ENCODE measurements at regions of chr20 and their contacts with region 1.

Region 1: GRCh38 chr20:1392823-1393506 is at the start of gene FKBP1A:
- DNase-seq: peak; percentile 84 to 97 (median 92)
- ATAC-seq: peak; percentile 83
- H3K4me3 ChIP-seq: peak within 1 kb of the TSS; percentile 85
- H3K4me3 Mint-ChIP-seq: peak within 1 kb of the TSS; percentile 98
- H3K27ac ChIP-seq: peak within 1 kb of the TSS; percentile 37 to 72
- H3K27ac Mint-ChIP-seq: peak within 1 kb of the TSS; percentile 89
- H3K4me1 ChIP-seq: peaks cover 60% of the 10 kb centered on the region
- H3K4me1 Mint-ChIP-seq: peaks cover 61% of the 10 kb centered on the region
- H3K27me3 ChIP-seq: no peaks in the 10 kb centered on the region
- H3K27me3 Mint-ChIP-seq: no peaks in the 10 kb centered on the region
- CTCF ChIP-seq: no peak
- total RNA-seq, gene FKBP1A: 43.3 to 45.4 TPM

Region 2: DNA sequence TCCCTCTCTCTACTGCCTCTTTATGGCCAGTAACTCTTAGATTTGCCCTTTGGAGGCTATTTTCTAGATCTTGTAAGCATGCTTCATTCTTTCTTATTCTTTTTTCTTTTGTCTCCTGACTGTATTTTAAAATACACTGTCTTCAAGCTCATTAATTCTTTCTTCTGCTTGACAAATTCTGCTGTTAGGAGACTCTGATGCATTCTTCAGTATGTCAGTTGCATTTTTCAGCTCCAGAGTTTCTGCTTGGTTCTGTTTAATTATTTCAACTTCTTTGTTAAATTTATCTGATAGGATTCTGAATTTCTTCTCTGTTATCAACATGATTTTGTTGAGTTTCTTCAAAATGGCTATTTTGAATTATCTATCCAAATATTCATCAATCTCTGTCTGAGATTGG is 39.0 kb before region 1 on chr20:
- CTCF ChIA-PET with region 1: no interaction called
- POLR2A ChIA-PET with region 1: no interaction called
- intact Hi-C with region 1: no loop called
- DNase-seq: no peak
- ATAC-seq: no peak
- H3K4me3 ChIP-seq: no peak overlapping the region
- H3K4me3 Mint-ChIP-seq: no peak overlapping the region
- H3K27ac ChIP-seq: no peak overlapping the region
- H3K27ac Mint-ChIP-seq: no peak overlapping the region
- H3K4me1 ChIP-seq: peaks cover 10% of the 10 kb centered on the region
- H3K4me1 Mint-ChIP-seq: peaks cover 33% of the 10 kb centered on the region
- H3K27me3 ChIP-seq: no peaks in the 10 kb centered on the region
- H3K27me3 Mint-ChIP-seq: no peaks in the 10 kb centered on the region
- CTCF ChIP-seq: no peak

Region 3: GRCh38 chr20:1437235-1437904 is 44.4 kb after region 1 on chr20:
- CTCF ChIA-PET with region 1: interaction called, 3 read pairs
- POLR2A ChIA-PET with region 1: interaction called, 6 read pairs
- intact Hi-C with region 1: loop called (anchors 2 to 5 kb)
- DNase-seq: peak; percentile 68 to 90 (median 75)
- ATAC-seq: peak; percentile 70
- H3K4me3 ChIP-seq: no peak overlapping the region
- H3K4me3 Mint-ChIP-seq: no peak overlapping the region
- H3K27ac ChIP-seq: no peak overlapping the region
- H3K27ac Mint-ChIP-seq: no peak overlapping the region
- H3K4me1 ChIP-seq: peaks cover 27% of the 10 kb centered on the region
- H3K4me1 Mint-ChIP-seq: peaks cover 56% of the 10 kb centered on the region
- H3K27me3 ChIP-seq: no peaks in the 10 kb centered on the region
- H3K27me3 Mint-ChIP-seq: no peaks in the 10 kb centered on the region
- CTCF ChIP-seq: peak; percentile 90

Region 4: GRCh38 chr20:1562622-1563021 is 169.7 kb after region 1 on chr20:
- CTCF ChIA-PET with region 1: no interaction called
- POLR2A ChIA-PET with region 1: no interaction called
- intact Hi-C with region 1: no loop called
- DNase-seq: peak in 2 of 14 experiments; percentile 9 to 17
- ATAC-seq: no peak
- H3K4me3 ChIP-seq: no peak overlapping the region
- H3K4me3 Mint-ChIP-seq: no peak overlapping the region
- H3K27ac ChIP-seq: no peak overlapping the region
- H3K27ac Mint-ChIP-seq: no peak overlapping the region
- H3K4me1 ChIP-seq: no peaks in the 10 kb centered on the region
- H3K4me1 Mint-ChIP-seq: peaks cover 5% of the 10 kb centered on the region
- H3K27me3 ChIP-seq: peaks cover 0 to 2% of the 10 kb centered on the region in 2 experiments
- H3K27me3 Mint-ChIP-seq: no peaks in the 10 kb centered on the region
- CTCF ChIP-seq: no peak